ENCODE measurements at regions of chr6 and their contacts with region 1.

Region 1: GRCh38 chr6:160455541-160456213 is 107.5 kb downstream of the SLC22A3 start:
- DNase-seq: peak; percentile 68
- H3K4me3 ChIP-seq: no peak overlapping the region
- H3K27ac ChIP-seq: no peak overlapping the region
- H3K4me1 ChIP-seq: no peaks in the 10 kb centered on the region
- H3K27me3 ChIP-seq: no peaks in the 10 kb centered on the region
- CTCF ChIP-seq: peak; percentile 98

Region 2: GRCh38 chr6:160088069-160088783 is 367.5 kb before region 1 on chr6:
- intact Hi-C with region 1: loop called (anchors 2 kb)
- DNase-seq: peak; percentile 79
- H3K4me3 ChIP-seq: no peak overlapping the region
- H3K27ac ChIP-seq: no peak overlapping the region
- H3K4me1 ChIP-seq: peaks cover 5% of the 10 kb centered on the region
- H3K27me3 ChIP-seq: no peaks in the 10 kb centered on the region
- CTCF ChIP-seq: peak; percentile 60

Region 3: DNA sequence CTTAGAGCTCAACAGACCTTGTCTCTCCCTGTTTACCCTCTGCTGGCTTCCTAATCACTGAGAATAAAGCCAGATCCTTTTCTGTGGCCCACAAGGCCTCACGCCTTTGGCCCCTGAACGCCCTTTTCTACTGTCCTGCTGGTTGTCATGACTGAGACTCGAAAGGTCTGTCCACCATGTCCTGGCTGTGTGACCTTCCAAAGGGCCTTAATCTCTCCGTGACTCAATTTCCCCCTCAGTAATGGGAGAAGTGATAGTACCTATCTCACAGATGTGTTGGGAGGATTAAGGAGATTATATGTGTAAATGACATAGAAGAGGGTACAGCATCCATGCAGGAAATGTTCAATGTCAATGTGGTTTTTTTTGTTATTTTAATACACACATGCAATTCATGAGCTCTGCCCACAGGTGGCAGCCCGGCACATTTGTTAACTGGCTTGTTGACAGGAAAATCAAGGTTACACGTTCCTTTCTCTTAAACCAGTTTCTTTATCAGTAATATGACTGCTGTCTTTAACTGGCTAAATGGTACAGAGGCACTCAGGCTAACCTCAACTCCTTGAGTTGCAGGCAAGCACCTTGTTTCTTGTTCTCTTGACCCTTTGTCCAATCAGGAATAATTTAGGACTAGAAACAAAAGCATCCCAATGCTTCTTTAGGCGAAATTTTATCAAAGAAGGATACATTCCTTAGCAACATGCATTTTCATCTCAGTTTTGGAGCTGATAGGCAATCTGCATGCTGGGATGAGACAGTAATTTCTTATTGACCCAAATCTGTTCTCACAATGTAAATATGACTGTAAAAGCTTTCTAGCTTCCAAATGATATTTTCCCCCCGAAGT is 317.5 kb before region 1 on chr6:
- intact Hi-C with region 1: loop called (anchors 2 kb)
- DNase-seq: peak; percentile 69
- H3K4me3 ChIP-seq: no peak overlapping the region
- H3K27ac ChIP-seq: no peak overlapping the region
- H3K4me1 ChIP-seq: no peaks in the 10 kb centered on the region
- H3K27me3 ChIP-seq: no peaks in the 10 kb centered on the region
- CTCF ChIP-seq: peak; percentile 69

Region 4: GRCh38 chr6:160300076-160300695 is 155.5 kb before region 1 on chr6:
- intact Hi-C with region 1: loop called (anchors 10 kb)
- DNase-seq: peak; percentile 92
- H3K4me3 ChIP-seq: no peak overlapping the region
- H3K27ac ChIP-seq: peak overlapping the region; percentile 80
- H3K4me1 ChIP-seq: no peaks in the 10 kb centered on the region
- H3K27me3 ChIP-seq: no peaks in the 10 kb centered on the region
- CTCF ChIP-seq: no peak

Measured in colonic mucosa (tissue), 4 donors.